ENCODE measurements at regions of chr2 and their contacts with region 1.

Region 1: DNA sequence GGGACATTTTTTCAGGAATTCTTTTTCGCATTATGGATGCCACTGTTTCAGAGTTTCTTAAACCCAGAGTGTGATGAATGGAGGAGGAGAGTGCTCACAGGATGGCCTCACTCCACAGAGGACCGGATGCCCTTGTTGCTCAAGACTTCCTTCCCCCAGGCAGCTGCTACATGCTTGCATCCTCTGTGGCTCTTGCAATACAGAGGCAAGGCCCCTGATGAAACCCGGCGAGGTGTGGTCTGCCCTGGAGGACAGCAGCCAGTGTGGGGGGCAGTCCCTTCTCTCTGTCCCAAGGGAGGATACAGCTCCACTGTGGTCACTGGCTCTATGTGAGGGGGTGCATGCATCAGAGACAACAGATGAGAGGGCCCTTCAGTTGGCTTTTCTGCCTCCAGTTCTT is 109.6 kb downstream of the SH3RF3 start:
- DNase-seq: peak; percentile 94
- H3K4me3 ChIP-seq: no peak overlapping the region
- H3K27ac ChIP-seq: peak overlapping the region; percentile 25 to 58 (median 51)
- H3K4me1 ChIP-seq: peaks cover 45 to 50% (median 48%) of the 10 kb centered on the region in 4 donors
- H3K27me3 ChIP-seq: no peaks in the 10 kb centered on the region
- CTCF ChIP-seq: no peak
- EP300 ChIP-seq: no peak
- POLR2A ChIP-seq: no peak

Region 2: DNA sequence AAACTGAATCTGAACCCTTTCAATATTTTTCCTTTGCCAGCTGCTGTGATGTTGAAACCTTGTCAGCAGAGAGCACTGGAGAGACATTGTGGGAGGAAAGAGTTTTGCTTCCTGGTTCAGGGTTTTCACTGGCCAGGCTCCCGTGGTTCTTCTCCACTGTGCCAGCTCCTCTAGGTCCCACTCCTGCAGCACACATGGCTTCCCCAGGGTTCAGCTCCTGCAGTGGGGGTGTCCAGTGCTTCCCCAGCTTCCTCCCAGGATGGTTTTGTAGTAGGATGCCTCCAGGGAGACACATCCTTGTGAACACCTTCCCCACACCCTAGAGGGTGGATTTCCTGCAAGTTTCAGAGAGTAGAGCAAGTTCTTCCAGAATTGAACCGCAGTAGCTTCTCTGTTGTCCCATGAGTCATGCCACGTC is 1022.8 kb before region 1 on chr2:
- intact Hi-C with region 1: no loop called
- DNase-seq: peak; percentile 81
- H3K4me3 ChIP-seq: no peak overlapping the region
- H3K27ac ChIP-seq: no peak overlapping the region
- H3K4me1 ChIP-seq: no peaks in the 10 kb centered on the region
- H3K27me3 ChIP-seq: no peaks in the 10 kb centered on the region
- CTCF ChIP-seq: no peak
- EP300 ChIP-seq: no peak
- POLR2A ChIP-seq: no peak

Region 3: GRCh38 chr2:109193807-109194619 is 44.6 kb before region 1 on chr2:
- intact Hi-C with region 1: loop called (anchors 5 kb)
- DNase-seq: no peak
- H3K4me3 ChIP-seq: no peak overlapping the region
- H3K27ac ChIP-seq: no peak overlapping the region
- H3K4me1 ChIP-seq: peaks cover 15 to 32% (median 23%) of the 10 kb centered on the region in 4 donors
- H3K27me3 ChIP-seq: no peaks in the 10 kb centered on the region
- CTCF ChIP-seq: no peak
- EP300 ChIP-seq: no peak
- POLR2A ChIP-seq: no peak

Region 4: GRCh38 chr2:109382951-109383350 is 144.4 kb after region 1 on chr2:
- intact Hi-C with region 1: no loop called
- DNase-seq: no peak
- H3K4me3 ChIP-seq: no peak overlapping the region
- H3K27ac ChIP-seq: no peak overlapping the region
- H3K4me1 ChIP-seq: peaks cover 21 to 26% (median 24%) of the 10 kb centered on the region in 4 donors
- H3K27me3 ChIP-seq: no peaks in the 10 kb centered on the region
- CTCF ChIP-seq: no peak
- EP300 ChIP-seq: no peak
- POLR2A ChIP-seq: no peak

Measured in esophagus muscularis mucosa (tissue), 4 donors.